WTC11 (cell line): ENCODE measurements at regions of chr22 and their contacts with region 1.

Region 1: GRCh38 chr22:41589391-41590241 is at the start of gene PMM1:
- DNase-seq: peak; percentile 100
- ATAC-seq: peak; percentile 99
- H3K4me3 Mint-ChIP-seq: peak within 1 kb of the TSS; percentile 89
- H3K27ac Mint-ChIP-seq: peak within 1 kb of the TSS; percentile 76
- H3K4me1 Mint-ChIP-seq: peaks cover 6% of the 10 kb centered on the region
- H3K27me3 Mint-ChIP-seq: peaks cover 10% of the 10 kb centered on the region; the same call in 1 of the 2 replicates
- CTCF ChIP-seq: no peak
- total RNA-seq, gene PMM1: 14.8 to 15.7 TPM (median 15.0 TPM) in 3 replicates

Region 2: GRCh38 chr22:41367039-41367679 is 222.5 kb before region 1 on chr22:
- CTCF ChIA-PET with region 1: no interaction called
- POLR2A ChIA-PET with region 1: no interaction called
- DNase-seq: peak; percentile 42
- ATAC-seq: peak; percentile 33
- H3K4me3 Mint-ChIP-seq: no peak overlapping the region
- H3K27ac Mint-ChIP-seq: peak overlapping the region; percentile 87; the same call in 1 of the 2 replicates
- H3K4me1 Mint-ChIP-seq: peaks cover 12% of the 10 kb centered on the region
- H3K27me3 Mint-ChIP-seq: no peaks in the 10 kb centered on the region
- CTCF ChIP-seq: no peak

Region 3: GRCh38 chr22:41458161-41458728 is 131.4 kb before region 1 on chr22:
- CTCF ChIA-PET with region 1: interaction called, 4 read pairs
- POLR2A ChIA-PET with region 1: interaction called, 13 read pairs
- DNase-seq: no peak
- ATAC-seq: no peak
- H3K4me3 Mint-ChIP-seq: no peak overlapping the region
- H3K27ac Mint-ChIP-seq: 0 out of 2 replicates have a peak overlapping the region, but pooled peaks have one; percentile 36
- H3K4me1 Mint-ChIP-seq: no peaks in the 10 kb centered on the region
- H3K27me3 Mint-ChIP-seq: no peaks in the 10 kb centered on the region
- CTCF ChIP-seq: no peak

Region 4: GRCh38 chr22:41557401-41558240 is 32.0 kb before region 1 on chr22:
- CTCF ChIA-PET with region 1: interaction called, 12 read pairs
- POLR2A ChIA-PET with region 1: interaction called, 7 read pairs
- DNase-seq: peak; percentile 39
- ATAC-seq: peak; percentile 16; the same call in 1 of the 2 replicates
- H3K4me3 Mint-ChIP-seq: no peak overlapping the region
- H3K27ac Mint-ChIP-seq: no peak overlapping the region; the same call in 1 of the 2 replicates
- H3K4me1 Mint-ChIP-seq: peaks cover 37% of the 10 kb centered on the region
- H3K27me3 Mint-ChIP-seq: no peaks in the 10 kb centered on the region
- CTCF ChIP-seq: no peak

Region 5: GRCh38 chr22:41621099-41621910 is 31.7 kb after region 1 on chr22 and contains the start of gene XRCC6:
- CTCF ChIA-PET with region 1: interaction called, 4 read pairs
- POLR2A ChIA-PET with region 1: interaction called, 12 read pairs
- DNase-seq: peak; percentile 100
- ATAC-seq: peak; percentile 92
- H3K4me3 Mint-ChIP-seq: peak within 1 kb of the TSS; percentile 94
- H3K27ac Mint-ChIP-seq: peak within 1 kb of the TSS; percentile 99
- H3K4me1 Mint-ChIP-seq: peaks cover 20% of the 10 kb centered on the region
- H3K27me3 Mint-ChIP-seq: no peaks in the 10 kb centered on the region; the same call in 1 of the 2 replicates
- CTCF ChIP-seq: no peak
- total RNA-seq, gene XRCC6: 410 to 474 TPM (median 420 TPM) in 3 replicates

Region 6: GRCh38 chr22:41642331-41643110 is 52.9 kb after region 1 on chr22:
- CTCF ChIA-PET with region 1: no interaction called
- POLR2A ChIA-PET with region 1: no interaction called
- DNase-seq: no peak
- ATAC-seq: no peak
- H3K4me3 Mint-ChIP-seq: no peak overlapping the region
- H3K27ac Mint-ChIP-seq: peak overlapping the region; percentile 37
- H3K4me1 Mint-ChIP-seq: no peaks in the 10 kb centered on the region
- H3K27me3 Mint-ChIP-seq: no peaks in the 10 kb centered on the region
- CTCF ChIP-seq: no peak